Panc1 (cell line): ENCODE measurements at regions of chr3 and their contacts with region 1.

Region 1: DNA sequence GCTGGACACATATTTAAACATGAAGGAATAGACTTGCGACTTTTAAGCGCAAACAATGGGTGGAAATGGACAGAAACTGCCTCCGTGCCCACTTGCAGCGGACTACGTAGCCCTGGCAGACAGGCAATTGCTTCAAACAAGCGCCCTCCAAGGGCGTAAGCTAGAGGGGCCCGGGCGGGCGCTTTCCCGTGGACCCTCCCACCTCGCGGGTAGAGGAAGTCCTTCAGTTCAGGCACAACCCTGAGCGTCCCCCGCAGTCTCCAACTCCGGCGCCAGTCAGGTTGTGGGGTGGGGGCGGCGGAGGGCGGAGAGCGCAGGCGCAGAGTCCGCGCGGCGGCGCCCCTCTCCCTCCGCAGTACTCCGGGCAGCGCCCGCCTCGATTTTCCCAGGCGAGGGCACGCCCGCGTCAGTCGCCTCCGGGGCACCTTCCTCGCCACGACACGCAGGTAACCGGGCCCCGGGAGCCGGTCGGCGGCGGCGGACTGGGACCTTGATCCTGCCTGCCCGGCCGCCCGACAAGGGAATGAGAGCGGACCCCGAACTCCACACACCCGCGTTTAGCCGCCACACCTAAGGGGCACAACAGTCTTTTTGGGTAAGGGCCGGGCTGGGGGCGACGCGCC is at the start of gene SLC35G2:
- DNase-seq: no peak
- ATAC-seq: peak; percentile 79
- H3K4me3 ChIP-seq: peak within 1 kb of the TSS; percentile 70 to 72
- H3K27ac ChIP-seq: peak within 1 kb of the TSS; percentile 78
- H3K4me1 ChIP-seq: peaks cover 10% of the 10 kb centered on the region
- H3K27me3 ChIP-seq: no peaks in the 10 kb centered on the region
- CTCF ChIP-seq: no peak
- total RNA-seq, gene SLC35G2: 15.0 TPM

Region 2: DNA sequence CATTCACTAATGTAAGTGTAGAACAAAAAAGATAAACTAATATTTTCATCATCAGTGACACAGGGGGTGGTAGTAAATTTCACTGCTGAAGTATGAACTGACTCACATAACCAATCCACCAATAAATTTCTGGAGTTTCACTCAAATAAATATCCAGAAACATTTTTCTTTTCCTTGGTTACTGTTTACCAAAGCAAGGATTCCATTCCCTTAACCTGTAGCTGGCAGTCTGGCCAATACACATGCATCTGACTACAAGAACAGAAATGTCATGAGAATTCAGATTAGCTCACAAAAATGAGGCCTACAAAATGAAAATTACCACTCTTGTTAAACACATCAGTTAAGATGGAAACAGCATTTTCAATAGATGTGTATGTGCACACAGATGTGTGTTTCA is 147.0 kb before region 1 on chr3:
- CTCF ChIA-PET with region 1: no interaction called
- POLR2A ChIA-PET with region 1: no interaction called
- in situ Hi-C with region 1: no loop called
- intact Hi-C with region 1: no loop called
- DNase-seq: no peak
- ATAC-seq: no peak
- H3K4me3 ChIP-seq: no peak overlapping the region
- H3K27ac ChIP-seq: no peak overlapping the region
- H3K4me1 ChIP-seq: no peaks in the 10 kb centered on the region
- H3K27me3 ChIP-seq: no peaks in the 10 kb centered on the region
- CTCF ChIP-seq: no peak

Region 3: GRCh38 chr3:137792626-137793271 is 973.9 kb after region 1 on chr3:
- CTCF ChIA-PET with region 1: no interaction called
- POLR2A ChIA-PET with region 1: interaction called, 17 read pairs
- in situ Hi-C with region 1: no loop called
- intact Hi-C with region 1: no loop called
- DNase-seq: peak; percentile 28
- ATAC-seq: no peak
- H3K4me3 ChIP-seq: no peak overlapping the region
- H3K27ac ChIP-seq: no peak overlapping the region
- H3K4me1 ChIP-seq: no peaks in the 10 kb centered on the region
- H3K27me3 ChIP-seq: peaks cover 10% of the 10 kb centered on the region; the same call in 1 of the 2 replicates
- CTCF ChIP-seq: peak; percentile 82